Activated CD4-positive, alpha-beta T cell treated with anti-CD3 and anti-CD28 coated beads for 36 hours (primary cell): ENCODE measurements at regions of chr18 and their contacts with region 1.

Region 1: DNA sequence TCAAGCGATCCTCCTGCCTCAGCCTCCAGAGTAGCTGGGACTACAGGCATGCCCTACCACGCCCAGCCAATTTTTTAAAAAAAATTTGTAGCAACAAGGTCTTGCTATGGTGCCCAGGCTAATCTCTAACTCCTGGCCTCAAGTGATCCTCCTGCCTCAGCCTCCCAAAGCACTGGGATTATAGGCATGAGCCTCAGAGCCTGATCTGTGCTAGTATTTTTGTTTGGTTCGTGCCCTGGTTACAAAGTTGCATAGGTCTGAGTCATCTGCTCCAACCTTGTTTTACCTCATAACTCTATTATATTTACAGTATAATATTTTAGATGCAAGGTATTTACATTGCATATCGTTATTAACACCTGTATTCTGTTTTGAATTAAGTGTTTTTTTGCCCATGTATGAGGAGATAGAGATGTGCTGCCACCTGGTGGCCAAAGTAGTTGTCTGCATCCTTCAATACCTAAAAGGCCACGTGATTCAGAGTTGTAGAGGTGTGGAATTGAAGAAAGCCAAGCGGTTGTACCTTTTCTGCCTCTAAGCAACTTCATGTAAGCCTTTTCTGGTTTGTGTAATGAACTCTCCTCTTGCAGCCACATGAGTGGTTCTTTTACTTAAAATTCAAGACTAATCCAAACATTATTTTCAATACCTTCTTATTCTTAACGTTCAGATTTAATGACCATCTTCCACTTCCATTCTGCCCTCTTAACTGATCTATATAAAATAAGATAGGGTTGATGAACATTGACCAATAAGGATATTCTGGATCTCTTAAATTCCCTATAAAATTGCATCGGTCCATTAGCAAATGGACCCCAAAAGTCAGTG is 19.9 kb upstream of the CABYR start:
- DNase-seq: peak; percentile 87
- ATAC-seq: peak; percentile 81
- H3K4me3 Mint-ChIP-seq: no peak overlapping the region
- H3K27ac Mint-ChIP-seq: no peak overlapping the region
- H3K4me1 Mint-ChIP-seq: peaks cover 20% of the 10 kb centered on the region
- H3K27me3 Mint-ChIP-seq: no peaks in the 10 kb centered on the region

Region 2: DNA sequence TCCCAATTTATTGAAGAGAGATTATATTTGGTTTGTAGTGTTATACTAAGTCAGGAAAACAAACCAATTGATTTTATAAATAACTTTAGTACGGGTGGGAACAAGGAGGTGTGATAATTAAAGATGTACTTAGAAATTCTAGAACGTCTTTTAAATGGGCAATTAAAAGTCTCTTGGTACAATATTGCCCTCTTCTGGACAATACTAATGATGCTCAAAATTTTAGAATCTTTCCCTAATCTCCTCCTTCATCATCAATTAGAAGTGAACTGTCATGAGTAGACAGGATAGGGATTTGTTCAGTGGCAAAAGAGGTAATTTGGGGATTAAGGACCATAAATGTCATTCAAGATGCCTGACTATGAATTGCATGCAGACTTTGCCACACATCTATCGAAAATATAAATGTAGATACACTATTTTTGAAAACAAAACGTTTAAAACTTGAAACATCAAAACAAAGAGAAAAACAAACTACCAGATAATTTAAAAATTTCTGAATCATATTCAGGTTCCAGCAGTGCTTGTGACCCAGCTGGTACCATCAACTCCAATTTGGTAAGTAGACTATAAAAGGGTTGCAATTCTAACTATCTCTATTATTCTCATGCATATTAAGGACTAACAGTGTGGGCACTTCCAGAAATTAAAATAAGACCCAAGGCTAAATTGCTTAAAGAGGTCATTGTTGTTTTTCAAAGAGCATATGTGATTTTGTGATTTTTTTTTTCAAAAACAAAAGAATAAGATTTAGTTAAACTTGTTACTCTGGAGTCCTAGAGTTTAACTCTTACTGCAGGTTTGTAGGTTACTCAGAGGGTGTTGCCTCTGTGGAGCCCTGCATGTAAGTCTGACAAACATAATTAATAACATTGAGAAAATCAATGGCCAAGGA is 306.2 kb before region 1 on chr18:
- CTCF ChIA-PET with region 1: no interaction called
- POLR2A ChIA-PET with region 1: no interaction called
- intact Hi-C with region 1: loop called in 1 of 2 experiments (anchors 5 kb)
- DNase-seq: no peak
- ATAC-seq: no peak
- H3K4me3 Mint-ChIP-seq: no peak overlapping the region
- H3K27ac Mint-ChIP-seq: no peak overlapping the region
- H3K4me1 Mint-ChIP-seq: peaks cover 13% of the 10 kb centered on the region
- H3K27me3 Mint-ChIP-seq: peaks cover 2% of the 10 kb centered on the region

Region 3: GRCh38 chr18:23918401-23919032 is 200.4 kb before region 1 on chr18:
- CTCF ChIA-PET with region 1: interaction called, 13 read pairs
- POLR2A ChIA-PET with region 1: no interaction called
- intact Hi-C with region 1: loop called (anchors 1 to 5 kb)
- DNase-seq: peak; percentile 89
- ATAC-seq: peak; percentile 88
- H3K4me3 Mint-ChIP-seq: no peak overlapping the region
- H3K27ac Mint-ChIP-seq: no peak overlapping the region
- H3K4me1 Mint-ChIP-seq: peaks cover 12% of the 10 kb centered on the region
- H3K27me3 Mint-ChIP-seq: peaks cover 2% of the 10 kb centered on the region

Region 4: GRCh38 chr18:24014062-24014985 is 104.6 kb before region 1 on chr18 and contains the start of gene TTC39C:
- CTCF ChIA-PET with region 1: no interaction called
- POLR2A ChIA-PET with region 1: no interaction called
- intact Hi-C with region 1: loop called (anchors 2 kb)
- DNase-seq: peak; percentile 93
- ATAC-seq: peak; percentile 68
- H3K4me3 Mint-ChIP-seq: peak within 1 kb of the TSS; percentile 94
- H3K27ac Mint-ChIP-seq: peak within 1 kb of the TSS; percentile 84
- H3K4me1 Mint-ChIP-seq: peaks cover 70% of the 10 kb centered on the region
- H3K27me3 Mint-ChIP-seq: peaks cover 2% of the 10 kb centered on the region
- total RNA-seq, gene TTC39C: 22.2 to 28.6 TPM

Region 5: DNA sequence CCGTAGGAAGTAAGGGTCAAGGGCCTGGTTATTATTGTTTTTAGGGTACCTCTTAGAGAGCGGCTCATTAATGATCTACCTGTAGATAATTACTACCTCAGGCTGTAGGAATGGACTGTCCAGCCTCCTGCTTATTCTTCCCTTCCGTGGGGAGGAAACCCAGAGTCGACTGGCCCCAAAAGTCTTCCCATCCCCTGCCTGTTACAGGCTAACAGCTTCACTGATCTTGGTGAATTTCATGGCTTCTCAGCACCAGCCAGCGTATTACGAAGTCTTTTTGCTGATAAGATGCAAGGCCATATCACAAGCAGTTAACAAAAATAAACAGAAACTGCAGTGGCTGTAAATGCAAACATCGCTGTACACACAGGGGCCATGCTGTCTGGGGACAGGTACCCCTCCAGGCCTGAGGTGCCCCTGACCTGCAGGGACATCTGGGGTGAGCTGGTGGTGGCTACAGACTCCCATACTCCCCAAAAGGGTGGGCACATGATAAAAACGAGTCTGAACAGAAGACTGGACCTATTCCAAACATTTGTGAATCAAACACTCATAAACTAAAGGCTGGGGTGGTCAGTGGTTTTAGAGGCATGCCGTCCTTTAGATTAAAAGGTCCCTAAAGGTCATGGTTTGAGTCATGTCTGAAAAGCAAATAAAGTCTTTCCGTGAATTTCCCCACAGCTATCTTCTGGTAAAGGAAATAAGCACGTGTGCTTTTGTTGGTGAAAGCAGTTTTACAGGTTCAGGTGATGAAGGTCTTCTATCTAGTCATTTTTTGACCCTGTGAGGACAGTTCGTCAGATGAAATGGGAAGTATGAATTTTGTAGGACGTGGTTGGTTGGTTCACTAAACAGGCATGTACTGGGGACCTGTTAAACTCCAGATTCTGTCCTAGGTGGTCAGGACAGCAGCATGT is 67.7 kb before region 1 on chr18:
- CTCF ChIA-PET with region 1: interaction called, 5 read pairs
- POLR2A ChIA-PET with region 1: no interaction called
- intact Hi-C with region 1: loop called in 1 of 2 experiments (anchors 2 kb)
- DNase-seq: no peak
- ATAC-seq: peak; percentile 24
- H3K4me3 Mint-ChIP-seq: no peak overlapping the region
- H3K27ac Mint-ChIP-seq: peak overlapping the region; percentile 79
- H3K4me1 Mint-ChIP-seq: peaks cover 73% of the 10 kb centered on the region
- H3K27me3 Mint-ChIP-seq: no peaks in the 10 kb centered on the region